ENCODE measurements at regions of chr3 and their contacts with region 1.

Region 1: GRCh38 chr3:170180908-170181879 is at the start of gene PHC3:
- DNase-seq: peak; percentile 95
- H3K4me3 Mint-ChIP-seq: peak within 1 kb of the TSS; percentile 98
- H3K27ac Mint-ChIP-seq: peak within 1 kb of the TSS; percentile 100
- H3K4me1 Mint-ChIP-seq: peaks cover 21% of the 10 kb centered on the region
- H3K27me3 Mint-ChIP-seq: no peaks in the 10 kb centered on the region
- total RNA-seq, gene PHC3: 37.4 to 38.7 TPM

Region 2: DNA sequence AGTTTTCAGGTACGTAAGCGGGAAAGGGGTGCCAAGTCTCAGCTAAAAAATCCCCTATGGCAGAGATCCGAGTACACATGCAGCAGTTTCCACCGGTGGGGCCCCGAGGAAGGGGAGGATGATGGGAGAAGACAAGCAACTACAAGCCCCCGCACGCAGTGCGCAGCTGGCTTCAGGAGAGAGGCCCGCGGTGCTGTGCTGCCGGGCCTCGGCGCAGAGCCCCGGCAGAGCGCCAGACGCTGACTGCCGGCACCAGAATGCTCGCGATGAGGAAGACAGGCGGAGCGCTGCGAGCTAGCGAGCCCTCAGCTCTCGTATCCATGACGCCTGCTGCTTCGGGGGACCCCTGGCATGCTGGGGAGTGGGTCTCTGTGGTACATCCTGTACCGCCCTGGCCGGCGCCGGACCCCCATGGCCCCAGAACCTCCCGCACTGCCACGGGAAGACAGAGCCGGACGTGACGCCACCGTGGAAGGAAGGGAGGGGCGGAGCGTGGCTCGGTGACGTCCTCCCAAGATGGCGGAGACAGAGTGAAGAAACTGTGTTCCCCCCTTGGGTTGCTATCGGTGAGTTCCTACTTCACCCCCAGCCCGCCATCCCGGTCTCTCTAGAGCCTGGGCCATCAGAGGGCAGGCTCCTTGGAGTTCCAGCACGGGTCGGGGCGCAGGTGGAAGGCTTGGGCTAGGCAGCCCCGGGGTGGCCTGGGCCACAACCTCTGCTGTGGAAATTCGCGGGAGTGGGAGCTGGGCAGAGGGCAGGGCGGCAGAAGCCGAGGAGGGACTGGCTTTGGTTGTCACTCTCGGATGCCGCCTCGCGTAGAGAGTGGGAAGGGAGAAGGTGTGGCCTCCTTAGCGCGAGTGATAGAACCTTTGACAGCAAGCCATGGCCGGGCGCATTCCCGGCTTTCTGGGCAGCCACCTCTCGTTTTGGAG is 408.0 kb before region 1 on chr3 and contains the start of gene MYNN:
- CTCF ChIA-PET with region 1: no interaction called
- POLR2A ChIA-PET with region 1: interaction called, 3 read pairs
- intact Hi-C with region 1: loop called (anchors 1 kb)
- DNase-seq: peak; percentile 95
- H3K4me3 Mint-ChIP-seq: peak within 1 kb of the TSS; percentile 96
- H3K27ac Mint-ChIP-seq: peak within 1 kb of the TSS; percentile 97
- H3K4me1 Mint-ChIP-seq: peaks cover 39% of the 10 kb centered on the region
- H3K27me3 Mint-ChIP-seq: no peaks in the 10 kb centered on the region
- total RNA-seq, gene MYNN: 12.8 to 14.0 TPM

Region 3: DNA sequence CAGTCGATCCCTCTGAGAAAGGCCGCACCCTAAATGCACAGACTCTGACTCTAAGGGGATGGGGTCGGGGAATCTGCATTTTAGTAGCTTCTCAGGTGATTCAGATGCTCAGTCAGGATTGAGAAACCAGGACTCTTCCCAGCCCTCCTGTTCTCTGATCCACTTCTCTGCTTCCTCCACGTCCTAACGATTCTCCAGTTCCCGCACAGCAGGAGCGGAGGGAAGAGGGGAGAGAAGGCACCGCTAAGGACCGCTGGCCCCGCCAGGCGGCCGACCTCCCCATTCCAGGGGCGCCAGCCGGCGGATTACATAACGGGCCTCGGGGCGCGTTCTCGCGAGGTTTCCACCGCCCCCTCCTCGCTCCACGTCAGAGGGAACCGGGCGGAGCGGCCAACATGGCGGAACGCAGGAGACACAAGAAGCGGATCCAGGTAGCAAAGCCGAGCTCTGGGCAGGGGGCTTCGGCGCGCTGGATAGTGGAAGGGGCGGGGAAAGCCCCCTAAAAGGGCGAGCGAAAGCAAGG is 214.7 kb before region 1 on chr3 and contains the start of gene SEC62:
- CTCF ChIA-PET with region 1: no interaction called
- POLR2A ChIA-PET with region 1: interaction called, 4 read pairs
- intact Hi-C with region 1: loop called (anchors 2 kb)
- DNase-seq: peak; percentile 97
- H3K4me3 Mint-ChIP-seq: peak within 1 kb of the TSS; percentile 80
- H3K27ac Mint-ChIP-seq: peak within 1 kb of the TSS; percentile 96
- H3K4me1 Mint-ChIP-seq: peaks cover 59% of the 10 kb centered on the region
- H3K27me3 Mint-ChIP-seq: no peaks in the 10 kb centered on the region
- total RNA-seq, gene SEC62: 59.7 to 60.7 TPM

Region 4: DNA sequence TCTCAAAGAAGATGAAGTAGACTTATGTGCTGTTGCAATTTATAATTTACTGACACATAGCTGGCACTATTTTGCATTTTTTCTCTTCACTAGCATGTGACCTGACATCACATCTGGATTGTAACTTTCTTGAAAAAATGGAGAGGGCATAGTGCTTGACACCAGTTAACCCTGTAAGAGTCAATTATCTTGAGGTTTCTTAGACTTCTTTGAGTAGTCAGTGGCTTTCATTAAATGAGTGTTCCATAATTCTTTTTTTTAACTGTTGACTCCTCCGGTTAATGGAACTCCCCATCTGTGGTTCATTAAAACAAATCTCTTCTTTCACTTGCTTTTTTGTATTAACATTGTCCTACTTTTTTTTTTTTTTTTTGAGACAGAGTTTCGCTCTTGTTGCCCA is 24.1 kb after region 1 on chr3:
- CTCF ChIA-PET with region 1: no interaction called
- POLR2A ChIA-PET with region 1: interaction called, 3 read pairs
- intact Hi-C with region 1: loop called (anchors 1 kb)
- DNase-seq: no peak
- H3K4me3 Mint-ChIP-seq: no peak overlapping the region
- H3K27ac Mint-ChIP-seq: no peak overlapping the region
- H3K4me1 Mint-ChIP-seq: peaks cover 17% of the 10 kb centered on the region
- H3K27me3 Mint-ChIP-seq: peaks cover 18% of the 10 kb centered on the region

Region 5: GRCh38 chr3:170357176-170357919 is 176.2 kb after region 1 on chr3 and contains the start of gene SKIL:
- CTCF ChIA-PET with region 1: interaction called, 3 read pairs
- POLR2A ChIA-PET with region 1: interaction called, 5 read pairs
- intact Hi-C with region 1: loop called (anchors 1 kb)
- DNase-seq: peak; percentile 96
- H3K4me3 Mint-ChIP-seq: peak within 1 kb of the TSS; percentile 77
- H3K27ac Mint-ChIP-seq: peak within 1 kb of the TSS; percentile 94
- H3K4me1 Mint-ChIP-seq: peaks cover 42% of the 10 kb centered on the region
- H3K27me3 Mint-ChIP-seq: no peaks in the 10 kb centered on the region
- total RNA-seq, gene SKIL: 20.9 to 22.7 TPM

Region 6: DNA sequence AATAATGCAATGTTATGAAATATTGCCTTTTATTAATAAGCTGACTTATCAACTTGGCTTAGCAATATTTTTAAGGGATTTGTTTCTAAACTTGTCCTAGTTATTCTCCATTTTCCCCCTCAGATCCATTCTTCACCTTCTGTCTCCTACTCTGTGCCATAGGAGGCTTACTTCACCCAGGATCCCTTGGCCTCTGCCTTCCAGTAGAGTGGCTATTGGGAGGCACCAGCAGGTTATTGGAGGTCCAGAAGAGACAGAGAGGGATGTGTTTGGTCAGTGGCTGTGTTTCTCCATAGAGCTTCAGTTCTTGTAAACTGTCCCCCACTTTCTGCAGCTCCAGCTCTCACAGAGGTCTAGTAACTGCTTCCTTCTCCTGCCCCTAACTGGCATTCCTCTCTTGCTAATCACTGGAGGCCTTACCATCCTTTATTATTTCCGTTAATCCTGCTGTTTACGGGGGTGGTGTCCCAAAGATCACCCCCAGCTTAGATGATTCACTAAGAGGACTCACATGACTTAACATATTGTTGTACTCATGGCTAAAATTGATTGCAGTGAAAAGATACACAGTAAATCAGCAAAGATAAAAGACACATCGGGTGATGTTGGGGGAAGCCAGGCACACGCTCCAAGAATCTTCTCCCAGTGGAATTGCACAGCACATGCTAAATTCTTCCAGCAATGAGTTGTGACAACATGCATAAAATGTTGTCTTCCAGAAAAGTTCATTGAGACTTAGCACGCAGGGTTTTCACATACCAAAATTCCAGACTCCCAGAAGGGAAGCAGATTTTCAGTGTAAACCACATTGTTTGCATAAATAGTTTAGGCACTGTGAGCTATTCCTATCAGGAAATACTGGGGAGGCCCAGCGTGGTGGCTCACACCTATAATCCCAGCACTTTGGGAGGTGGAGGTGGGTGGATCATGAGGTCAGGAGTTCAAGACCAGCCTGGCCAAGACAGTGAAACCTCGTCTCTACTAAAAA is 621.3 kb after region 1 on chr3:
- CTCF ChIA-PET with region 1: no interaction called
- POLR2A ChIA-PET with region 1: no interaction called
- intact Hi-C with region 1: no loop called
- DNase-seq: no peak
- H3K4me3 Mint-ChIP-seq: no peak overlapping the region
- H3K27ac Mint-ChIP-seq: no peak overlapping the region
- H3K4me1 Mint-ChIP-seq: no peaks in the 10 kb centered on the region
- H3K27me3 Mint-ChIP-seq: peaks cover 35% of the 10 kb centered on the region

Measured in activated CD4-positive, alpha-beta memory T cell treated with anti-CD3 and anti-CD28 coated beads for 36 hours (primary cell).